Activated B cell treated with CpG ODN at 0.5 μM for 24 hours (primary cell): ENCODE measurements at regions of chr2 and their contacts with region 1.

Region 1: DNA sequence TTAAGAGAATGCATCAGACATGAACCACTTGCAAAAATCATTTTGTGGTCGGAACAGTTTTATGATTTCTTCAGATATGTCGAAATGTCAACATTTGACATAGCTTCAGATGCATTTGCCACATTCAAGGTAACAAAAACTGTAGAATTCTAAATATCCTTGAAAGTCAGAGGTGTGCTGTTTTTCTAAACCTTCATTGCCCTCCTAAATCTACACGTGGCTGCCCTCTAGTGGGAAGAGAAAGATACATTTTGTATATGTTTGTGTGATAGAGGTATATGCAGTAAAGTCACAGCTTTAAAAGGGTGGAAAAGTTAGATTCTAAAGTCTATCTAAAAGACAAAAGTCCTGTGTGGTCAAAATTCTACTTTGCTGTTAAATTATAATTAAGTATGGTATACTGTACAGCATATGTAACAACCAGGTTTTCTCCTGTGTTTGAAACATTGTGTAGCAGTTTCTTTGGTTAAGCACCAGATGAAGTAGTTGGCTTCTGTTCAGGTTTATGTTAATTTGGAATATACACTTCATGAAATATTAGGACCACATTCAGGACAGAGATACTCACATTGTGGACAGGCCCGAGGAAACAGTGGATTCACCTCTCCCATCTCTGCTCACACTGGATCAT is 65.9 kb upstream of the ITM2C start:
- DNase-seq: no peak
- ATAC-seq: peak; percentile 46
- H3K4me3 Mint-ChIP-seq: no peak overlapping the region
- H3K27ac Mint-ChIP-seq: no peak overlapping the region
- H3K4me1 Mint-ChIP-seq: peaks cover 14% of the 10 kb centered on the region
- H3K27me3 Mint-ChIP-seq: no peaks in the 10 kb centered on the region
- CTCF ChIP-seq: no peak

Region 2: GRCh38 chr2:230400454-230400853 is 398.4 kb before region 1 on chr2:
- CTCF ChIA-PET with region 1: no interaction called
- POLR2A ChIA-PET with region 1: interaction called, 16 read pairs
- intact Hi-C with region 1: no loop called
- DNase-seq: no peak
- ATAC-seq: no peak
- H3K4me3 Mint-ChIP-seq: no peak overlapping the region
- H3K27ac Mint-ChIP-seq: peak overlapping the region; percentile 37
- H3K4me1 Mint-ChIP-seq: no peaks in the 10 kb centered on the region
- H3K27me3 Mint-ChIP-seq: no peaks in the 10 kb centered on the region
- CTCF ChIP-seq: no peak

Region 3: GRCh38 chr2:230814616-230815015 is 15.7 kb after region 1 on chr2:
- CTCF ChIA-PET with region 1: interaction called, 14 read pairs
- POLR2A ChIA-PET with region 1: no interaction called
- intact Hi-C with region 1: no loop called
- DNase-seq: no peak
- ATAC-seq: no peak
- H3K4me3 Mint-ChIP-seq: no peak overlapping the region
- H3K27ac Mint-ChIP-seq: no peak overlapping the region
- H3K4me1 Mint-ChIP-seq: no peaks in the 10 kb centered on the region
- H3K27me3 Mint-ChIP-seq: no peaks in the 10 kb centered on the region
- CTCF ChIP-seq: no peak

Region 4: DNA sequence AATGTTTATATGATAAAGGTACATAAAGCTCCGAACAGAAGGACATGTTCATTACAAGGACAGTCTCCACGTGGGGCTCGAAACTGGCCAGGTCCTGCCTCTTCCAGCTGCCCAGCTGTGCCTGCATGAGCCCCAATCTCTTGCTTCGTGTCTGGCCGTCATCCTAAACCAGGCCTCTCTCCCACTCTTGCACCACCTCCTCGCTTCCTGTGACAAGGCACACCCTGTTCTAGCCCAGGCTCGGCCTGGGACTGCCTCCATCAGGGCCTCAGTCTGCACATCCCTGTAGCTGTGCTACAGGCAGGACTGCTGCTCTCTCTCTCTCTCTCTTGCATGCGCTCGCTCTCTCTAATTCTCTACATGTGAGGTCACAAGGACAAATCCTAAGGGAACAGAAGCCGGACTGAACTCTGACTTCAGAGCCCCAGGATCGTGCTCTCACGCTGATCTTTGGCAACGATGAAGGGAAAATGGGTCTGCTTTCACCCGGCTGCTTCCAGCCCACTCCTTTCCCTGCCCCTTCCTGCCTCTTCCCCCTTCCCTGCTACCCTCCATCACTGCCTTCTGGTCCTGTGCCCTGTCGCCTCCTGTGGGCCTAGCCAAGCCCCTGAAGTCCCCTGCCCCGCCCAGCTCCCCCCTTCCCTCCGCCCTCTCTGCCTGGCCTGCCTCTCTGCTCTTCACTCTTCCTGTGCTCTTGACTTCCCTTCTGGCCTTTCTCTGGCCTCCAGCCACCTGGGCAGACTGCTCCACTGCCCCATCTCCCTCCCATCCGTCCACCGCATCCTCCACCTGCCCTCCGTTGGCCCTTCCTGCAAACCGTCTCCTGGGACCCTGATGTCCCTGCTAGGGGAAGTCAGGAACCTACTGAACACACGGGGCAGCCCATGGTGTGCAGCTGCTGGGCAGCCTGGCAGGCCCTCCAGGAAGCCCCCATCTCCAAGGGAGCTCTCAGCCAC is 133.9 kb after region 1 on chr2:
- CTCF ChIA-PET with region 1: no interaction called
- POLR2A ChIA-PET with region 1: no interaction called
- intact Hi-C with region 1: no loop called
- DNase-seq: no peak
- ATAC-seq: no peak
- H3K4me3 Mint-ChIP-seq: no peak overlapping the region
- H3K27ac Mint-ChIP-seq: no peak overlapping the region
- H3K4me1 Mint-ChIP-seq: no peaks in the 10 kb centered on the region
- H3K27me3 Mint-ChIP-seq: no peaks in the 10 kb centered on the region
- CTCF ChIP-seq: no peak